ENCODE measurements at regions of chr17 and their contacts with region 1.

Region 1: DNA sequence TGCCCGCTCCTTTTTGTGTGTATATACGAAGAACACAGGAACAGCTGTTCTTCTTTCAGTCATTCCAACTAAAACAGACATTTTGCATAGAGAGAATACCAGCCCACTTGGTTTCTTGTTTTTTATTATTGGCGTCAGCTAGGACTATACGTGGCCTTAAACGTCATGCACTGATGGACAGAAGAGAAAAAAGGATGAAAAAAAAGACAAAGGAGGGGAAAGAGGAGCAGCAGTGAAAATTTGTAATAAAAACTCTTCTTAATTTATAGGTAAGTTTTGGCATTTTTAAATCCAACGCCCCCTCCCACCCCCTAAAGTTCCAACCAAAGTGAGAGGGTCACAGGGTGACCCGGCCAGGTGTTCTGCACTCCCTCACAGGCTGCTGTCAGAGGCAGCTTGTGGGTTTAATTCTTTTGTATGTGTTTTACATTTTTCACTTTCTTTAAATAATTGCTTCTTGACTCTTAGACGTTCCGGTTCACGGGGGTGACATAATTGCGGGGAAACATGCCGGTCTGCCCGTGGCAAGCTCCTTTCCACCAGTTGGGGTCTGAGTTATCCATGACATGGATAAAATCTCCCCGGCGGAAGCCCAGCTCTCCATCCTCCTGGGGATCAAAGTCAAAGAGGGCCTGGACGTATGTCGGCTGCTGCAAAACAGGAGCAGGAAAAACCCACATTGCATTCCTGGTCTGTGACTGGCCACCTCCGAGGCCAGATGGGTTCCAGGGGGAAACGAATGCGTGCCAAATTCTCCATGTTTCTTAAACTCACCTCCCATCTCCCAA is 30.9 kb upstream of the SLC25A19 start:
- DNase-seq: no peak
- H3K4me3 Mint-ChIP-seq: no peak overlapping the region
- H3K27ac Mint-ChIP-seq: no peak overlapping the region
- H3K4me1 Mint-ChIP-seq: no peaks in the 10 kb centered on the region
- H3K27me3 Mint-ChIP-seq: no peaks in the 10 kb centered on the region
- CTCF ChIP-seq: no peak

Region 2: DNA sequence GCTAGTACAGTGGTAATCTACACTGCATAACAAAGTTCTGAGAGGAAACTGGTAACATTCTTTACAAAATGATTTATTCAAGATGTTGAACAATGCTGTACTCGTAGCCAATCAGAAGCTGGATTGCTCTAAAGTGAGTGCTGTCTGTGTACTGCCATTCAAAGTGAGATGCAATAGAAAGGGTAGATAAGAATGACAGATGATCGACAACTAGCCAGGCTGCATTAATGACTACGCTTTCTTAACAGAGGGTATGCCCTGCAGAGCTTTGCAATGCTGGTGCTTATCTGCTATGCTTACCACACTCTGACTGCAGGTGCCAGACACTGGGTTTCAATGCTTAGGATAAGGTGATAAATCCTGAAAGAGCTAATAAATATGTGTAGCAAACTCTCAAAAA is 15.2 kb after region 1 on chr17:
- CTCF ChIA-PET with region 1: interaction called, 15 read pairs
- POLR2A ChIA-PET with region 1: interaction called, 4 read pairs
- intact Hi-C with region 1: no loop called
- DNase-seq: no peak
- H3K4me3 Mint-ChIP-seq: no peak overlapping the region
- H3K27ac Mint-ChIP-seq: no peak overlapping the region
- H3K4me1 Mint-ChIP-seq: no peaks in the 10 kb centered on the region
- H3K27me3 Mint-ChIP-seq: no peaks in the 10 kb centered on the region
- CTCF ChIP-seq: no peak

Region 3: GRCh38 chr17:75405365-75406221 is 85.5 kb after region 1 on chr17 and contains the start of gene GRB2:
- CTCF ChIA-PET with region 1: interaction called, 15 read pairs
- POLR2A ChIA-PET with region 1: interaction called, 14 read pairs
- intact Hi-C with region 1: loop called (anchors 1 kb)
- DNase-seq: peak; percentile 96
- H3K4me3 Mint-ChIP-seq: peak within 1 kb of the TSS; percentile 88
- H3K27ac Mint-ChIP-seq: peak within 1 kb of the TSS; percentile 80
- H3K4me1 Mint-ChIP-seq: peaks cover 11% of the 10 kb centered on the region
- H3K27me3 Mint-ChIP-seq: no peaks in the 10 kb centered on the region
- CTCF ChIP-seq: no peak
- total RNA-seq, gene GRB2: 67.1 and 74.6 TPM in 2 replicates

Region 4: GRCh38 chr17:75412455-75413317 is 92.6 kb after region 1 on chr17:
- CTCF ChIA-PET with region 1: interaction called, 30 read pairs
- POLR2A ChIA-PET with region 1: interaction called, 4 read pairs
- intact Hi-C with region 1: loop called (anchors 1 kb)
- DNase-seq: peak; percentile 74
- H3K4me3 Mint-ChIP-seq: peak overlapping the region; percentile 35
- H3K27ac Mint-ChIP-seq: peak overlapping the region; percentile 76
- H3K4me1 Mint-ChIP-seq: peaks cover 11% of the 10 kb centered on the region
- H3K27me3 Mint-ChIP-seq: peaks cover 30% of the 10 kb centered on the region
- CTCF ChIP-seq: peak; percentile 82